Mucosa of descending colon (tissue), 3 donors: ENCODE measurements at regions of chr11 and their contacts with region 1.

Region 1: DNA sequence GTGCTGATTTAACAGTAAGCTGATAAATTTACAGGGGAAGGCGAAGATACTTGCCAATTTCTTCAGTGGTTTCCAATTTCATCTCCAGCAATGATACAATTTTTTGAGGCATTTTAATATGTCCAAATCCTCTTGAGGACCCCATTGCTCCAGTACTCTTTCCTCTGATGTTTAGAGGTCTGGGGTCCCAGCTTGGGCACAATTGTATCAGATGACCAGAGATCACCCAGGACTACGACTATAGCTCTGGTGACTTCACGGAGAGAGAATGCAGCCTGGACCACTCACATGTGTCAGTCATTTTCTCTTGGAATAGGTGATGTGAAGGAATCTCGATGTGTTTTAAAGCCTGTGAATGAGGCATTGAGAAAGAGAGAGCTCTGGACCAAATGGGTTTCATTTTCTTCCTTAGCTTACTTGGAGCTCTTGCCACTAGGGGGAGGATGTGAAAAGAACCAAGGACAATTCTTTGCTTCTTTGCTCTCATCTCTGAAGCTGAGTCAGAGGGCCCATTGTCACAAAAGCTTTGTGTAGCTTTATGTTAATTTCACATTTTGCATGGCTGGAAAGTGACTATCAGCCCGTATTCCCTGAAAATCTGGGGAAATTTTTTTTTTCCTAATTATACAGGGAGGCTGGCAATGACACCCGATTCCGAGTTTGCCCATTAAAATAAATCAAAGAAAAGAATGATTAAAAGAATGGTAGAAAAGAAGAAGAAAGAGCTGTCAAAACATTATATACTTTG is 6.7 kb upstream of the CCDC90B start:
- DNase-seq: peak in 1 of 3 donors; percentile 61
- ATAC-seq: peak; percentile 57
- H3K4me3 ChIP-seq: no peak overlapping the region
- H3K4me1 ChIP-seq: no peaks in the 10 kb centered on the region
- CTCF ChIP-seq: peak; percentile 21

Region 2: GRCh38 chr11:83175815-83176214 is 117.1 kb before region 1 on chr11:
- intact Hi-C with region 1: no loop called
- DNase-seq: no peak
- ATAC-seq: peak; percentile 95
- H3K4me3 ChIP-seq: no peak overlapping the region
- H3K4me1 ChIP-seq: peaks cover 28% of the 10 kb centered on the region
- CTCF ChIP-seq: no peak

Region 3: DNA sequence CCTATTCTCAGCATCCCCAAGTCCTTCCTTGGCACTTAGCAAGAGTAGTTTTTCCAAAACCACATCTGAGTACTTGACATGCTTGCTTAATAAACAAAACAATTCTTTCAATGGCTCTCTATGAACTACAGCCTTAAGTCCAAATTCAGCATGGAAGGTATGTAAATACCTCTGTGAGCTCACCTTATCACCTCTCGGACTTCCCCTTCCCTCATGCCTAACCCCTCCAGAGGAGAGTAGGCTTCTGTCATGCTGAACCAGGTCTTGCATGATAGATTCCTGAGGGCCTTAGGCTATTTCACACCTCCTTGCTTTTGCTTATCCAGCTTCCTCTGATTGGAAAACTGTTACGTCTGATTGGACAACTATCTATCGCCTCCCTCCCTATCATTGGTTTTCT is 306.2 kb after region 1 on chr11:
- intact Hi-C with region 1: no loop called
- DNase-seq: no peak
- ATAC-seq: no peak
- H3K4me3 ChIP-seq: no peak overlapping the region
- H3K4me1 ChIP-seq: no peaks in the 10 kb centered on the region
- CTCF ChIP-seq: no peak

Region 4: DNA sequence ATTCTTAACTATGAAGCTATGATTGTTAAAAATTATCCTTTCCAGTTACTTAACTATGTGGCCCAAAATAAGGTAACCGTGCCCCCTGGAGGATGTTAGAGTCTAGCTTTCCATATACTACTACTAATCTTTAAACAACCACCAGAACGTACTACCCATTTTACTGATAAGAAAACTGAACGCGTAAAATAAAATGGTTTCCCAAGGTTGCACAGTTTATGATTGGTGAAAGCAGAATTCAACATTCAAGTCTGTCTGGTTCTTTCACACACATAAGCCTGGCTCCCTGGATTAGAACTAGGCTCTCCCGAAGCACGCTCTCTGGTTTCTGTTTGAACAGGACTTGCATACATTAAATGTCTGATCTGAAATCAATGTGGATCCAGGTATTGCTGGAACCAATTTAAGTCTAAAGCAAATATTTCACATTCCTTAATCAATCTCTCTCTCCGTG is 431.2 kb after region 1 on chr11:
- intact Hi-C with region 1: loop called in 1 of 2 experiments (anchors 10 kb)
- DNase-seq: peak in 1 of 3 donors; percentile 36
- ATAC-seq: no peak
- H3K4me3 ChIP-seq: no peak overlapping the region
- H3K4me1 ChIP-seq: no peaks in the 10 kb centered on the region
- CTCF ChIP-seq: no peak

Region 5: DNA sequence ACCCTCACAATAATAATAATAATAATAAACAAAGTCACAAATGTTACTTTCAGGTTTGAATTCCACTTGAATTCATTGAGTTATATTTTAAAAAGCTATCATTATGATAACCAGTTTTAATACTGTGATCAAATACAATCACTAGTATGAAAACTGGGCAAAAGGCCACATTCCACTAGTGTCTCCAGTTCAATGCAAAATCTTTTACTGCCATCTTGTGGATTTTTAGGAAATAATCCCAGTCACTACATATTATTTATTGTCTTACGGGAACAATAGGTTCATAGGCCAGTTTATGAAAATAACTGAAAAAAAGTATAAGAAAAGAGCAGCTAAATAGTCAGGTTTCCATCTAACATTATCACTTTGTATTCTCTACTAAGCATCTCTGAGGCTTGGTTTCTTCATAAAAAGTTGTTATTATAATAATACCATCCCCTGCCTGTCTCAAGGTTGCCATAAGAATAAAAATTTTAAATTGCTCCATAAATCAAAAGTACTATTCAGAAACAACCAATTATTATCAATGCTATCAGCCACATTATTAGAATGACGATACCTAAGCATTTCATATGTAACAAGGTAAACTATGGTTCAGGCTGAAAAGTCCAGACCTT is 527.2 kb after region 1 on chr11:
- intact Hi-C with region 1: loop called (anchors 5 to 10 kb)
- DNase-seq: peak in 1 of 3 donors; percentile 21
- ATAC-seq: no peak
- H3K4me3 ChIP-seq: no peak overlapping the region
- H3K4me1 ChIP-seq: no peaks in the 10 kb centered on the region
- CTCF ChIP-seq: no peak